GM10248 (cell line): ENCODE measurements at regions of chr6 and their contacts with region 1.

Region 1: DNA sequence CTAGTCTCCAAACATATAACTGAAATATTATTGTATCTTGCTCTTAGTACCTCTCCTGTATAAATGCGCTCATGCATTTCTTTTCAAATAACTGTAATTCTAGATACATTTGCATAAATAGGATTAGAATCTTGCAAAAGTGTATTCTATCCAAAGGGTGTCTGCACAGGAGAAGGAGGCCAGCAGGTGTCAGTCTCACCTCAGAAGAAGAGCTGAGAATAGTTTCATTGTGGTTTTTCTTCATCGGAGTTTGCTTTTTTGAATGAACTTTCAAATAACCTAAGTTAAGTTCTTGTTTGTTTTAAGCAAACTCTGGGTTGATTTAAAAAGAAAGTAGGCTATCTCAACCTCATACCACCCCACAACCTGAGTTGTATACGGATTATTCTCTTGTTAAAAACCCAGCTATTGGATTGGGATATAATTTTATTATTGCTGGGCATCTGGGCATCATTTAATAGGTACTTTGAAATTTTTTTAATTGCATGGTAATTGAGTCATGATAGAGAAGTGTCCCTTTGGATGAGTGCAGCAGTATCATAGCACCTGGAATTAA is 125.0 kb upstream of the MLIP start:
- DNase-seq: peak; percentile 15
- CTCF ChIP-seq: peak; percentile 46

Region 2: GRCh38 chr6:53975936-53976615 is 10.2 kb before region 1 on chr6:
- CTCF ChIA-PET with region 1: interaction called, 12 read pairs
- POLR2A ChIA-PET with region 1: no interaction called
- DNase-seq: no peak
- CTCF ChIP-seq: no peak

Region 3: GRCh38 chr6:53998303-53998702 is 12.1 kb after region 1 on chr6:
- CTCF ChIA-PET with region 1: interaction called, 20 read pairs
- POLR2A ChIA-PET with region 1: no interaction called
- DNase-seq: no peak
- CTCF ChIP-seq: no peak

Region 4: DNA sequence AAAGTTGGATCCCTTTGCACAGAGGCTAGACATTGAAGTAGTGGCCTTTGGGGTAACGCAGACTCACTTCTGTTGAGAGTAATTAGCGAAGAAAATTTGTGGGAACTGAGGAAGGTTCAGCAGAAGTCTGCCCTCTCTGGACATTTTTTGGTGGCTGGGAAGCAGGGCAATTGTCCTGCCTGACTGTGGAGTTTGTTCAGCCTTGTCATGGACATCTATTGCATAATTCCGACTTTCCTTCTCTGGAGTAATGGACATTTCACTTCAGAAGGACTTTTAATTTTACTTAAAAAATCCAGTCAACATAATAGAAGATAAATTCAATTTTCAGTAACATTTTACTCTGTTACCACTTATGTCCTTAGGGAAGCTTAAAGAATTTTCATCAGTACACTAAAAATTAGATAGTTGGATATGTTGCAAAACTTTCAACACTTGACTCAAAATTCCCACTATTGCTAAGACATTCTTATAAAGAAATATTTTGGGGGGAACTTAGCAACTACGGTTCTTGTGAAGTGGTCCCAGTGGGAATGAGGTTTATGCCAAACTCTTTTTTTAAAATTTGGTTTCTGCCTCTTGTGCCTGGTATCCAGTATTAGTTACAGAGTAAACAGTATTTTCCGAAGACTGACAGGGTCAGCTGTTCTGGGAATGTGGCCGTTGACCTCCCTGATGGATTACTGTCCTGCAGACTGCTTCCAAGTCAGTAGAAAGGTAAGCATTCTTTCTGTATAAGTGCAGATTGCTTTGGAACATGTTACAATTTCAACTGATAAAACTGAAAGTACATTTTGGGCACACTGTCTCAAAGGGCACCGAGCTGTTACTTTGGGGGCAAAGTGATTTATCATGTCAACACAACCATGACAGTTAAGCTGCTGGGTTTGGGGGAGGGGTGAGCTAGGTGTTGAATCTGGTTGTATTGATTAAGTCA is 24.4 kb after region 1 on chr6:
- CTCF ChIA-PET with region 1: no interaction called
- POLR2A ChIA-PET with region 1: no interaction called
- DNase-seq: no peak
- CTCF ChIP-seq: no peak